ENCODE measurements at regions of chr17 and their contacts with region 1.

Region 1: DNA sequence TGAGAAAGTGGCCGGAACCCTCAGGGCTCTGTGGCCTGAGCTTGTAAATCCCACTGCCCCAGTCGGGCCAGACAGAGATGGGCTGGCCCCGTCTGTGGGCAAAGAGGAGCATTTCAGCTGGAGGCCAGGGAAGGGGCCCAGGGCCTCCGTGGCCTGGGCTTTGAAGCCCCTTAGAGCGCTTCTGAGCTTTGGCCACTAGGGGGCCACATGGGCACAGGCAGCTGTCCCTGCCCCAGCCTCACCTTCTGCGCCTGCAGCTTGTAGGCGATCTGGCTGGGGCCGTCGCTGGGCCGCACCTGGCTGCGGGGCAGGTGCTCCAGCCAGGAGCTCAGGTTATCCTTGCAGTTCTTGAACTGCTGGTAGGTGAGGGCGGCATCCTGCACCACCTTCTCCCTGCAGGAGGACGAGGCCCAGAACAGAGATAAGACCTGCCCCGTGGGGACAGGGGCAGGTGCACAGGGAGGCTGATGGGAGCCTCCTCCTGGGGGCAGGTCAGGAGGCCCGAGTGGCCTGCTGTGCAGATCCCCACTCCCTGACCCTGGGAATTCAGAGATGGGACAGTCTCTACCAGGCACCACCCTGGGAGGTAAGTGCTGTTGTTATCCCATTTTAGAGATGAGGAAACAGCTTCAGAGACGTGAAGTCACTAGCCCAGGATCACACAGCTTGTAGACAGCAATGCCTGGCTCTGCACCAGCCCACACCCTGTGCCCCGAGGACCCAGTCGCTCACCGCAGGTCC is 12.8 kb downstream of the EVPL start:
- DNase-seq: peak; percentile 46
- ATAC-seq: peak; percentile 94
- H3K4me3 ChIP-seq: no peak overlapping the region
- H3K27ac ChIP-seq: peak overlapping the region; percentile 12; the same call in 1 of the 2 replicates
- H3K4me1 ChIP-seq: peaks cover 0 to 3% of the 10 kb centered on the region in 2 experiments; a peak in 1 of 4 replicates
- H3K27me3 ChIP-seq: no peaks in the 10 kb centered on the region
- CTCF ChIP-seq: peak; percentile 92 to 99 (median 98)
- POLR2A ChIP-seq: no peak
- RAD21 ChIP-seq: peak; percentile 98

Region 2: GRCh38 chr17:76000016-76000754 is 14.2 kb before region 1 on chr17:
- CTCF ChIA-PET with region 1: interaction called, 22 read pairs
- POLR2A ChIA-PET with region 1: no interaction called
- RAD21 ChIA-PET with region 1: no interaction called
- intact Hi-C with region 1: no loop called
- DNase-seq: peak; percentile 33
- ATAC-seq: peak; percentile 86
- H3K4me3 ChIP-seq: no peak overlapping the region
- H3K27ac ChIP-seq: peak overlapping the region; percentile 28; the same call in 1 of the 2 replicates
- H3K4me1 ChIP-seq: peaks cover 12 to 36% of the 10 kb centered on the region in 2 experiments
- H3K27me3 ChIP-seq: no peaks in the 10 kb centered on the region
- CTCF ChIP-seq: peak; percentile 93 to 99 (median 99)
- POLR2A ChIP-seq: no peak
- RAD21 ChIP-seq: peak; percentile 85

Region 3: DNA sequence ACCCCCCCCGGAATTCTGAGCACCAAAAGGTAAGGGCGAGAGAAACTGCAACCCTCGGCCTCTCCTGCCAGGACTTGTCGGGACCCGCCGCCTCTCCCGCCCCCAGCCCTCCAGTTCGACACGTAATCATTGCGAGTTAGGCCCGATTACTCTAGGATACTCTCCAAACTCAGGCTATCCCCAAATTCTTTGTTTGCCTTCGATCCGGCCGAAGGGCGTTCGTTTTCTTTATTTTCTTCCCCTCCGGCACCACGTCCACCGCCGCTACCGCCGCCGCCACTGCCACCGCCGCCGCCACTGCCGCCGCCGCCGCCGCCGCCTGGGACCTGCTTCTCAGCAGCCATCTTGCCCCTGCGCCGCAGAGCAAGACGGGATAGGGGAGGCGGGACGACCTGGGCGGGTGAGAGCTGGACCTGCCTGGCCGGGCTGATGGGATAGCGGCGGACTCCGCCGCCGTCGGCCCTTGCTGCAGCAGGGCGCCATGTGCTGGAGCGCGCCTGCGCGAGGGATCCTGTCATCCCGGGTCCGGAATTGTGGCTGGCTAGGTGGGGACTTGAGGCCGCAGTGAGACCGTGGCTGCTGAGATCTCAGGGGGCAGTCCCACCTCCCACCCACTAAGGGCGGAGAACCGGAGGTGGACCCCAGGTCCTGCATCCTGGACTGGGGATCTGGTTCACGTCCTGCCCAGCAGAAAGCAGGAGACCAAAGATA is 57.9 kb after region 1 on chr17 and contains the start of gene SRP68:
- CTCF ChIA-PET with region 1: no interaction called
- POLR2A ChIA-PET with region 1: no interaction called
- RAD21 ChIA-PET with region 1: no interaction called
- intact Hi-C with region 1: loop called (anchors 1 kb)
- DNase-seq: peak; percentile 87
- ATAC-seq: peak; percentile 100
- H3K4me3 ChIP-seq: peak within 1 kb of the TSS; percentile 63 to 78
- H3K27ac ChIP-seq: peak within 1 kb of the TSS; percentile 60
- H3K4me1 ChIP-seq: peaks cover 11 to 22% of the 10 kb centered on the region in 2 experiments
- H3K27me3 ChIP-seq: no peaks in the 10 kb centered on the region
- CTCF ChIP-seq: no peak
- POLR2A ChIP-seq: peak; percentile 87
- RAD21 ChIP-seq: no peak
- total RNA-seq, gene SRP68: 152 TPM

Region 4: GRCh38 chr17:76103274-76104139 is 89.2 kb after region 1 on chr17 and contains the start of gene EXOC7:
- CTCF ChIA-PET with region 1: interaction called, 7 read pairs
- POLR2A ChIA-PET with region 1: no interaction called
- RAD21 ChIA-PET with region 1: interaction called in 1 of 2 experiments, 3 read pairs
- intact Hi-C with region 1: loop called (anchors 2 kb)
- DNase-seq: peak; percentile 90
- ATAC-seq: peak; percentile 83
- H3K4me3 ChIP-seq: peak within 1 kb of the TSS; percentile 78 to 95
- H3K27ac ChIP-seq: peak within 1 kb of the TSS; percentile 89
- H3K4me1 ChIP-seq: peaks cover 12 to 26% of the 10 kb centered on the region in 2 experiments
- H3K27me3 ChIP-seq: no peaks in the 10 kb centered on the region
- CTCF ChIP-seq: no peak
- POLR2A ChIP-seq: peak; percentile 98
- RAD21 ChIP-seq: no peak
- total RNA-seq, gene EXOC7: 114 TPM

Region 5: GRCh38 chr17:76182016-76182764 is 167.8 kb after region 1 on chr17:
- CTCF ChIA-PET with region 1: interaction called, 6 read pairs
- POLR2A ChIA-PET with region 1: no interaction called
- RAD21 ChIA-PET with region 1: no interaction called
- intact Hi-C with region 1: loop called (anchors 5 kb)
- DNase-seq: peak; percentile 99
- ATAC-seq: peak; percentile 85
- H3K4me3 ChIP-seq: no peak overlapping the region
- H3K27ac ChIP-seq: no peak overlapping the region
- H3K4me1 ChIP-seq: peaks cover 17 to 34% of the 10 kb centered on the region in 2 experiments
- H3K27me3 ChIP-seq: no peaks in the 10 kb centered on the region
- CTCF ChIP-seq: peak; percentile 94 to 98 (median 96)
- POLR2A ChIP-seq: peak; percentile 42
- RAD21 ChIP-seq: peak; percentile 86

Region 6: DNA sequence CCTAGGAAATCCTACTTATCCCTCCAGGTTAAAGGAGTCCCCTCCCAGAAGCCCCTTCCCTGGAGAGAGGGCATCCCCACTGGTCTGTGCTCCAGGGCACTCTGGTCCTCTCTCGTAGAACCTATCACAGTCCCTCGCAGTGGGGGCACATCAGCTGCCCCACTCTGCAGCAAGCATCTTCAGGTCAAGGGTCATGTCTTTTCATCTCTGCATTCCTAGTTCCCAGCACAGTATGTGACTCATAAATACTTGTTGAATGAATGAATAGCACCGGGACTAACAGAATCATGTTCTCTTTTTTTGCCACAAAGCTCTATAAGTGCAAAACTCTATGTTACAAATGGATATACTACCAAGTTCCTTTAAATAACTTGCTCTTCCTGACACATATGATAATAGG is 189.9 kb after region 1 on chr17:
- CTCF ChIA-PET with region 1: no interaction called
- POLR2A ChIA-PET with region 1: no interaction called
- RAD21 ChIA-PET with region 1: no interaction called
- intact Hi-C with region 1: no loop called
- DNase-seq: no peak
- ATAC-seq: peak; percentile 82
- H3K4me3 ChIP-seq: no peak overlapping the region
- H3K27ac ChIP-seq: no peak overlapping the region
- H3K4me1 ChIP-seq: peaks cover 11 to 13% of the 10 kb centered on the region in 2 experiments
- H3K27me3 ChIP-seq: no peaks in the 10 kb centered on the region
- CTCF ChIP-seq: no peak
- POLR2A ChIP-seq: no peak
- RAD21 ChIP-seq: no peak

Region 7: GRCh38 chr17:76278952-76279741 is 264.8 kb after region 1 on chr17:
- CTCF ChIA-PET with region 1: interaction called, 22 read pairs
- POLR2A ChIA-PET with region 1: no interaction called
- RAD21 ChIA-PET with region 1: interaction called, 4 to 5 read pairs
- intact Hi-C with region 1: loop called (anchors 2 kb)
- DNase-seq: peak; percentile 62
- ATAC-seq: peak; percentile 98
- H3K4me3 ChIP-seq: no peak overlapping the region
- H3K27ac ChIP-seq: no peak overlapping the region; the same call in 1 of the 2 replicates
- H3K4me1 ChIP-seq: peaks cover 0 to 15% of the 10 kb centered on the region in 2 experiments; a peak in 2 of 4 replicates
- H3K27me3 ChIP-seq: no peaks in the 10 kb centered on the region
- CTCF ChIP-seq: peak; percentile 98 to 100 (median 98)
- POLR2A ChIP-seq: no peak
- RAD21 ChIP-seq: peak; percentile 100

Region 8: DNA sequence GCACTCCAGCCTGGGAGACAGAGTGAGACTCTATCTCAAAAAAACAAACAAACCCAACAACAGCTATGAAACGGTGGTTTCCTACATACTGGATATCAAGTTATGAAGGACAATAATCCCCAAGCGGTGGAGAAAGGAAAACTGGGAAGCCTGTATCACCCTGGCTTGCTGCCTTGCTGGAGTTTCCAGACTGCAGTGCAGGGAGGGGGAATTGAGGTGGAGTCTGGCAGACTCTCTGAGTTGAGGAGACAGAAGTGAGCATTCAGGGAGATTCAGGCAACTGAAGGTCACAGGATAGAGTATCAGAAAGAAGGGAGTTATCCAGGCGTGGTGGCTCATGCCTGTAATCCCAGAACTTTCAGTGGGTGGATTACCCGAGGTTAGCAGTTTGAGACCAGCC is 281.8 kb after region 1 on chr17:
- CTCF ChIA-PET with region 1: interaction called, 4 read pairs
- POLR2A ChIA-PET with region 1: no interaction called
- RAD21 ChIA-PET with region 1: no interaction called
- intact Hi-C with region 1: loop called (anchors 1 kb)
- DNase-seq: no peak
- ATAC-seq: no peak
- H3K4me3 ChIP-seq: no peak overlapping the region
- H3K27ac ChIP-seq: no peak overlapping the region
- H3K4me1 ChIP-seq: no peaks in the 10 kb centered on the region
- H3K27me3 ChIP-seq: no peaks in the 10 kb centered on the region
- CTCF ChIP-seq: no peak
- POLR2A ChIP-seq: no peak
- RAD21 ChIP-seq: no peak

Measured in HCT116 (cell line).